ENCODE measurements at regions of chrX and their contacts with region 1.

Region 1: GRCh38 chrX:39261446-39262147 is 460.3 kb downstream of the MID1IP1 start:
- DNase-seq: peak; percentile 15
- H3K4me3 Mint-ChIP-seq: no peak overlapping the region
- H3K27ac Mint-ChIP-seq: peak overlapping the region; percentile 80
- H3K4me1 Mint-ChIP-seq: peaks cover 54% of the 10 kb centered on the region
- H3K27me3 Mint-ChIP-seq: no peaks in the 10 kb centered on the region

Region 2: DNA sequence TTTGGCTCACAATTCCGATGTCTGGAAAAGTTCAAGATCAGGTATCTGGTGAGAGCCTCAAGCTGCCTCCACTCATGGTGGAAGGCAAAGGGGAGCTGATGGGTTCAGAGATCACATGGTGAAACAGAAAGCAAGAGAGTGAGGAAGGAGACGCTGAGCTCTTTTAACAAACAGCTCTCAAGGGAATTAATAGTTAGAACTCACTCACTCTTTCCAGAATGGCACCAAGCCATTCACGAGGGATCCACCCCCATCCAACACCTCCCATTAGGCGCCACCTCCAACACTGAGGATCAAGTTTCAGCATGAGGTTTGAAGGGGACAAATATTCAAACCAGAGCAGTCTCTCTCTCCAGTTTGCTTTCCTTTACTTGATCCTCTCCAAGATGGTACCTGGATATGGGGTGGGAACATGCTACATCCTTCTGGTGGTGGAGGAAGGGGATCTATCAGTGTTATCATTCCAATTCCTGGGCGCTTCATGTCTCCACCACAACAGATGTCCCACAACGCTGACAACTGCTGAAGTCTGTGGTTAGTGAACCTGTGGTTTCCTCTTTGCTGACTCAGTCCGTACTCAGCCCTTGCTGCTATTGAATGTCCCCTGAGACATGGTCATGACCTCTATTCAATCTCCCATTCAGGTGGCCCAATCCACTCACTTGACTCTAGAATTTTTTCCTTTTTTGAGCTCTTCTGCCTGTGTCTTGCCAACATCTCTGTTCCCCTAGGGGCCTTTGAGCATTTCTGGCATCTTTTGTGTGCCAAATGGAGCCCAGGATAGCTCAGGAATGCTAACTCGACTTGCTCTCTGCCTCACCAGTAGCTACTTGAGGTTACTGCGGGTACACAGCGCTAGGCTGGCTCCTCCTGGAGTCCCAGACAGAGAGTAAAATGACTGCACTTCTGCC is 65.2 kb before region 1 on chrX:
- CTCF ChIA-PET with region 1: interaction called, 3 read pairs
- POLR2A ChIA-PET with region 1: no interaction called
- intact Hi-C with region 1: loop called (anchors 2 kb)
- DNase-seq: peak; percentile 75
- H3K4me3 Mint-ChIP-seq: peak overlapping the region; percentile 32
- H3K27ac Mint-ChIP-seq: peak overlapping the region; percentile 86
- H3K4me1 Mint-ChIP-seq: peaks cover 49% of the 10 kb centered on the region
- H3K27me3 Mint-ChIP-seq: peaks cover 2% of the 10 kb centered on the region

Region 3: DNA sequence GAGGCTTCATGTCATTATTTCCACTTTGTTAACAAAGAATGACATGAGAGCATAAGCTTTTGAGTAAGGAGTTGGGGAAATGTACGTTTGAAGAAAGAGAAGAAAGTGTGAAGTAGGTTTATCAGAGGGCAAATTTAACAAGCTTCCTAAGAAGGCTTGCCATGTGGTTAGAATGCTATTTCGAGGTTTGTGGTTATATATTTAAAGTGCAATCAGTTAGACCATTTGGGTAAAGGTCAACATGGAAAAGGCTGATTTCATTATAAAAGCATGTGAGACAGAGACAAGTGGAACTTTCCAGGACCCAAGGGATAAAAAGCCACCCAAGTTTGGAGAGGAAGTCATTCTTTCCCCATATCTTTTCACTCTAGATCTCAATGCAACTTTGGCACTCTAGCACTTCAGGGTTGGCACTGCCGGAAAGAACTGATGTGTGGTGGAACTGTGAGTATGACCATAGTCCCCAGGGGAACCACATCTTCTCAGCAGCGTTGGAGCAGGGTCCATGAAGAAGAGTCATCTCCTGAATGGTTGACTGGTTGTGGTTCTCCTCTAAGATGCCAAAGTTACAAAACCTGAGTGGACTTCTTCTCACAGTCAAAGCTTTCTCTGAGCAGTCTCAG is 69.6 kb after region 1 on chrX:
- CTCF ChIA-PET with region 1: interaction called, 5 read pairs
- POLR2A ChIA-PET with region 1: interaction called, 5 read pairs
- intact Hi-C with region 1: loop called (anchors 2 kb)
- DNase-seq: peak; percentile 73
- H3K4me3 Mint-ChIP-seq: no peak overlapping the region
- H3K27ac Mint-ChIP-seq: peak overlapping the region; percentile 88
- H3K4me1 Mint-ChIP-seq: peaks cover 71% of the 10 kb centered on the region
- H3K27me3 Mint-ChIP-seq: no peaks in the 10 kb centered on the region

Region 4: DNA sequence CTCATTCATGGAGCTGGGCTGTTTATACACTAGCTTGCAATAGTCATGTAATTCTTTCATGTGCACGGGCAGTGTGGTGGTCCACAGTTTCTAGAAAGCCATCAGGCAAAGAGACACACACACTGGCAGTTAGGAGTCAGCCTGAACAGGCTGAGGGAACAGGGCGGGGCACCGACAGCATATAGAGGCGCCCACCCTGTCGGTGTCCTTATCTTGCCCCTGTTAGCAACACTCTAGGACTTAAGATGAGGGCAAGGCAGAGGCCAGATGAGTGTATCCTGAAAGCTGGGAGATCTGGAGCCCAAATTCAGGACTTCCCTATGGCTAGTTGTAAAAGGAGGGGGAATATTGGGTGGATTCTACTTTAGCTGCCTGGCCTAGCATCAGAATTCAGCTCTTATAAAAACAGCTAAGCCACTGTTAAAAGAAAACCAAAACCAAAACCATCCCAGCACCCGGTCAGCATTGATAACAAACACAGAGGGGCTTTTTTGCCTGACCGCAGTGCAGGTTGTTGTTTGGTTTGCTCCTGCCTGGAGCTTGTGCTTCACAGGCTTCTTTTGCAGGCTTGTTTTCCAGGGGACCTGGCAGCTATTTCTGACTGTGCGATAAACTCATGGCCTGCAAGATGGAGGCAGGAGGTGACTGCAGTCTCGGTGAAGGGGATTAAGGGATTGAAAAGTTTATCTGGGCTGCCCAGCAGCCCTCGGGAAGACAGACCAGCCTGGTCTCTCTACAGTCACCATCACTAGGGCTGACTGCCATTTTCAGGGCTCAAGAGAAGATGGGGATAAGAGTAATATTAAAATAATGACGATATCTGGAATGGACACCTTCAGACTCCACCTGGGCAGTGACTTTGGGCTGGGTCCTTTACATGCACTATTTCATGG is 178.6 kb after region 1 on chrX:
- CTCF ChIA-PET with region 1: interaction called, 9 read pairs
- POLR2A ChIA-PET with region 1: interaction called, 4 read pairs
- intact Hi-C with region 1: loop called (anchors 2 kb)
- DNase-seq: peak; percentile 53
- H3K4me3 Mint-ChIP-seq: peak overlapping the region; percentile 46
- H3K27ac Mint-ChIP-seq: peak overlapping the region; percentile 93
- H3K4me1 Mint-ChIP-seq: peaks cover 40% of the 10 kb centered on the region
- H3K27me3 Mint-ChIP-seq: no peaks in the 10 kb centered on the region

Region 5: DNA sequence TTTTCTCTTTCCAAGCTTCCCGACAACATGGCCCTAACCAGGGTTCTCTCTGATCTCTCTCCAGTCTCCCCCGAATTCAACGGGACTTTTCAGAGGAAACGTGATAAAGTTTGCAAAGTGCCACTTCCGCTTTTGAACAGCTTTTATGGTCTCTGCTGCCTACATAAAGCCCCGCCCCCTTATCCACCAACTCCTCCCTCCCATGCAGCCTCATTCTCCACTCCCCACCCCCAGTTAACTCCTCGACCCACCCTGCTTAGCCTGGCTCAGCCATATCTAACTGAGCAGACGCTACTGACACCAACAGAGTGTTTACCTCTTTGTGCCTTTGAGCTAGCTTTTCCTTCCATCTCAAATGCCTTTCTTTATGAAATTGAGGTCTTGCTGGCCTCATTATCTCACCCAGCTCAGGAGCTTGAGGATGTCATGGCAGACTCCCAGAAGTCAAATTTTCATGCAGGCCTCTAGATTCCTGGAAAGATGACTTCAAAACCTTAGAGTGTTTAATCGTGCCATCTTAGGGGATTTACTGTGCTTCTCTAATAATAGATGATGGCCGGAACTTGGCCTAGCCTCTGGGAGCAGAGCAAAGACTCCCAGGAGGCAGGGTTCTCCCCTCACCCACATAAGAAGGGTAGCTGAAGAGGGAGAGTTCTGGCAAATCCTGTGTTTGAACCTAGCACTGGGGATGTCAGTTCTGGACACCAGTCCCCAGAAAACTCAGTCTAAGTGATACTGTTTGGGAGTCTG is 230.1 kb after region 1 on chrX:
- CTCF ChIA-PET with region 1: no interaction called
- POLR2A ChIA-PET with region 1: no interaction called
- intact Hi-C with region 1: loop called (anchors 1 kb)
- DNase-seq: peak; percentile 77
- H3K4me3 Mint-ChIP-seq: peak overlapping the region; percentile 34
- H3K27ac Mint-ChIP-seq: peak overlapping the region; percentile 83
- H3K4me1 Mint-ChIP-seq: peaks cover 50% of the 10 kb centered on the region
- H3K27me3 Mint-ChIP-seq: no peaks in the 10 kb centered on the region

Region 6: DNA sequence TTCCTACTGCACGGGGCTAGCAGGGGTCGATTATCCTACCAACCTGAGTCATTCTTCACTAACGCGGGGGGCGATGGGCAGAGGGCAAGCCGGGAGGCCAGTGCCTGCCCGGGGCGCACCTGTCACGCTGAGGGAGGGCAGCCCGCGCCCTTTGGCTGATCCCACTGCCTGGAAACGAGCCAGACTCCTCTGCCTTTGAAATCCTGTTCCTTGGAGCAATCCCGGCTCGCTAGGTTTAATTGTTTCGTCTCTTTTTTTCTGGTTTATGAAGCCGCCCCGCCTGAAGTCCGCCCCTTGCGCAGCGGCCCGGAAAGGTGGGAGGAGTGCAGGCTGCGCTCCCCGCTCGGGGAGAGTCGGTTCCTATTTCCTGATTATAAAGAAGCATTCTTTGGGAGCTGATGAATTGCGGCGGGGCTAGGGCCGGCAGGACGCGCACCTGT is 351.9 kb after region 1 on chrX:
- CTCF ChIA-PET with region 1: no interaction called
- POLR2A ChIA-PET with region 1: no interaction called
- intact Hi-C with region 1: loop called (anchors 10 kb)
- DNase-seq: peak; percentile 35
- H3K4me3 Mint-ChIP-seq: peak overlapping the region; percentile 78
- H3K27ac Mint-ChIP-seq: peak overlapping the region; percentile 95
- H3K4me1 Mint-ChIP-seq: peaks cover 29% of the 10 kb centered on the region
- H3K27me3 Mint-ChIP-seq: no peaks in the 10 kb centered on the region

Measured in activated CD4-positive, alpha-beta memory T cell treated with anti-CD3 and anti-CD28 coated beads for 36 hours (primary cell).